HepG2 (cell line): ENCODE measurements at regions of chr1 and their contacts with region 1.

Region 1: GRCh38 chr1:184075055-184076029 is 23.8 kb downstream of the TSEN15 start:
- DNase-seq: peak; percentile 57
- ATAC-seq: peak; percentile 65; the same call in 2 of the 3 replicates
- H3K4me3 ChIP-seq: no peak overlapping the region
- H3K27ac ChIP-seq: no peak overlapping the region
- H3K4me1 ChIP-seq: no peaks in the 10 kb centered on the region
- H3K27me3 ChIP-seq: no peaks in the 10 kb centered on the region
- CTCF ChIP-seq: peak; percentile 66
- EP300 ChIP-seq: no peak
- POLR2A ChIP-seq: no peak
- RAD21 ChIP-seq: peak; percentile 67

Region 2: DNA sequence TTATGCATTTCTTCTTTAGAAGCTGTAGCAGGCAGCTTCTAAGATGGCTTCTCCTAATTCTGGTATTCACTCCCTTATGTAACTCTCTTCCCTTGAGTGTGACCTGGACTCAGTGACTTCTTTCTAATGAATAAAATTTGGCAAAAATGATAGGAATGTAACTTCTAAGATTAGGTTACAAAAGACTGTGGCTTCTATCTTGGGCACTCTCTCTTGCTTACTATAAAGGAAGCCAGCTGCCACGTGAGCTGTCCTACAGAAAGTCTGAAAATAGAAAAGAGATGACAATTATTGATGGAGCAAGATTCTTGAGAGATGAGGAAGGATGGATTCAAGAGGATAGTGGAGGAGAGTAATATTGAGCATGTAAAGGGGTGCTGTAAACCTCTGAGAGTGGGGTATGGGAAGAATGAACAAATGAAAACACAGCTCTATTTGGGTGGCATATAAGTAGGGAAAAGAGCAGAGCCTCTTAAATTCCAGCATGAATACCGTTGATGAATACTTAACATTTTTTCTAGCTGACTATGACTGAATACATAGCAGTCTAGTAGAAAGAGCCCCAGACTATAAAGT is 18.3 kb before region 1 on chr1:
- CTCF ChIA-PET with region 1: no interaction called
- POLR2A ChIA-PET with region 1: no interaction called
- in situ Hi-C with region 1: no loop called
- intact Hi-C with region 1: no loop called
- DNase-seq: no peak
- ATAC-seq: no peak
- H3K4me3 ChIP-seq: no peak overlapping the region
- H3K27ac ChIP-seq: no peak overlapping the region
- H3K4me1 ChIP-seq: peaks cover 23% of the 10 kb centered on the region
- H3K27me3 ChIP-seq: no peaks in the 10 kb centered on the region
- CTCF ChIP-seq: no peak
- EP300 ChIP-seq: no peak
- POLR2A ChIP-seq: no peak
- RAD21 ChIP-seq: no peak

Region 3: DNA sequence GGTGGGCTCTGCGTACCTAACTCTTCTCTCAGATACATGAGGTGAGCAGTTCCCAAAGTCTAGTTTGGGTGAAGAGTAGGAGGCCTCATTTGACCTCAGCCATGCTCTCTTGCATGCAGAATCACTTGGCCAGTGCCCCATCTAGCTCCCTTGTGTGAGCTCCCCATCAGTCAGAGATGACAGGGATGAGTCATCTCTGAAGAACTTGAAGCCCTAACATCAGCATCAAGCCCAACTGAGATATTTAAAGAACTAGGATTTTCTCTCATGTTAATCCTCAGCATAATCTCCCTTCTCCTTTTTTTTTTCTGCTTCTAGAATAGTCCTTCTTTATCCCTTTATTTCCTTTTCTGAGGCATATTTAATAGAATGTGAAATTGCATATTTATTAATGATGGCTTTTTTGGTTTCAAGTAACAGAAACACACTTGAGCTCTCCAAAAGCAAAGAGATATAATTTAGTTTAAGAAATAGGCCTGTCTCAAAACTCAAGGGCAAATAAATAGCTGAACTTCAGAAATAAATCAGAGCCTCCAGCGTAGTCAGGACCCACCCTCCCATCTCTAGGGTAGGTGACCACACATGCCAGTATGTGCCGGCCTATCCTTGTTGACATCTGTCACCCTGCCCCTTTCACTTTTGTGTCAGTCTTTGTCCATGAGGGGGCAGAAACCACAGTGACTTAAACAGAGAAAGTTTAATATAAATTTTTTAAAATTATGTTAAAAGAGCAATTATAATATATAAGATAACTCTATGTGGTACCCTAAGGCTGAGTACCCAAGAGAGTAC is 88.5 kb after region 1 on chr1:
- CTCF ChIA-PET with region 1: no interaction called
- POLR2A ChIA-PET with region 1: no interaction called
- in situ Hi-C with region 1: no loop called
- intact Hi-C with region 1: no loop called
- DNase-seq: no peak
- ATAC-seq: no peak
- H3K4me3 ChIP-seq: no peak overlapping the region
- H3K27ac ChIP-seq: no peak overlapping the region
- H3K4me1 ChIP-seq: no peaks in the 10 kb centered on the region
- H3K27me3 ChIP-seq: peaks cover 0 to 4% of the 10 kb centered on the region in 2 experiments; a peak in 1 of 5 replicates
- CTCF ChIP-seq: no peak
- EP300 ChIP-seq: no peak
- POLR2A ChIP-seq: no peak
- RAD21 ChIP-seq: no peak

Region 4: GRCh38 chr1:184563308-184563707 is 488.0 kb after region 1 on chr1:
- CTCF ChIA-PET with region 1: no interaction called
- POLR2A ChIA-PET with region 1: no interaction called
- in situ Hi-C with region 1: loop called (anchors 10 kb)
- intact Hi-C with region 1: loop called (anchors 2 kb)
- DNase-seq: no peak
- ATAC-seq: no peak
- H3K4me3 ChIP-seq: no peak overlapping the region
- H3K27ac ChIP-seq: no peak overlapping the region
- H3K4me1 ChIP-seq: no peaks in the 10 kb centered on the region
- H3K27me3 ChIP-seq: no peaks in the 10 kb centered on the region
- CTCF ChIP-seq: peak; percentile 33
- EP300 ChIP-seq: no peak
- POLR2A ChIP-seq: no peak
- RAD21 ChIP-seq: no peak

Region 5: GRCh38 chr1:184664042-184664655 is 588.8 kb after region 1 on chr1:
- CTCF ChIA-PET with region 1: interaction called, 7 read pairs
- POLR2A ChIA-PET with region 1: no interaction called
- in situ Hi-C with region 1: loop called (anchors 25 kb)
- intact Hi-C with region 1: loop called (anchors 1 kb)
- DNase-seq: peak; percentile 19
- ATAC-seq: peak; percentile 97
- H3K4me3 ChIP-seq: peak overlapping the region in 1 of 3 experiments; percentile 48; a peak in 1 of 6 replicates
- H3K27ac ChIP-seq: no peak overlapping the region
- H3K4me1 ChIP-seq: no peaks in the 10 kb centered on the region; the same call in 1 of the 2 replicates
- H3K27me3 ChIP-seq: peaks cover 0 to 8% of the 10 kb centered on the region in 2 experiments; a peak in 1 of 5 replicates
- CTCF ChIP-seq: peak; percentile 89
- EP300 ChIP-seq: no peak
- POLR2A ChIP-seq: no peak
- RAD21 ChIP-seq: peak; percentile 79

Region 6: GRCh38 chr1:184691719-184692324 is 616.5 kb after region 1 on chr1:
- CTCF ChIA-PET with region 1: interaction called, 13 read pairs
- POLR2A ChIA-PET with region 1: no interaction called
- in situ Hi-C with region 1: no loop called
- intact Hi-C with region 1: loop called (anchors 1 kb)
- DNase-seq: peak; percentile 24
- ATAC-seq: peak; percentile 62
- H3K4me3 ChIP-seq: no peak overlapping the region
- H3K27ac ChIP-seq: no peak overlapping the region
- H3K4me1 ChIP-seq: no peaks in the 10 kb centered on the region
- H3K27me3 ChIP-seq: no peaks in the 10 kb centered on the region
- CTCF ChIP-seq: peak; percentile 65
- EP300 ChIP-seq: no peak
- POLR2A ChIP-seq: no peak
- RAD21 ChIP-seq: no peak